ENCODE measurements at regions of chr1 and their contacts with region 1.

Region 1: GRCh38 chr1:171081314-171081753 is 9.4 kb upstream of the FMO3 start:
- DNase-seq: peak; percentile 62
- ATAC-seq: peak; percentile 61
- H3K4me3 ChIP-seq: no peak overlapping the region
- H3K27ac ChIP-seq: no peak overlapping the region
- H3K4me1 ChIP-seq: no peaks in the 10 kb centered on the region
- H3K27me3 ChIP-seq: peaks cover 31% of the 10 kb centered on the region
- CTCF ChIP-seq: peak; percentile 79

Region 2: DNA sequence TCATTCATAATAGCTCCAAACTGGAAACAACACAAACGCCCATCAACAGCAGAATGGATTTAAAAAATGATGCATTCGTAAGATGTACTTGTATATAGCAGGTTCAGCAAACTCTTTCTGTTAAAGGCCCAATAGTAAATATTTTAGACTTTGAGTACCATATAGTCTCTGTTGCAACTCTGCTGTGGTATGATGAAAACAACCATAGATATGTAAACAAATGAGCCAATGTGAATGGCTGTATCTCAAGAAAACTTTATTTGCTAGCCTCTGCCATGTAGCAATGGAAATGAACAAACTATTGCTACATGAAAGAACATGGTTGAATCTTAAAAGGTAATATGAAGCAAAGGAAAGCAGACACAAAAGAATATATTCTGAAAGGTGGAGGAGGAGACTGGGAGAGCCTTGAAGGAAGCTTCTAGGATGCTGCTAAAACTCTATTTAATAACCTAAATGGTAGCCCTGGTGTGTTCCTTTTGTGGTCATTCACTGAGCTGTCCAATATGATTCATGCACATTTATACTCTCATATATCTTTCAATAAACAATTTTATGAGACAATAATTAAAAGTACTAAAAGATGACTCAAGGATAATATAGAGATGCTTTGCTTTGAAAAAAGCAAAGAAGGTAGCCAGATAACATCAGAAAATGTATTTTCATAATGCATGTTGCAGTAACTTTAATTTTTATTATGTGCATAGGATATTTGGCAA is 19.8 kb before region 1 on chr1:
- CTCF ChIA-PET with region 1: no interaction called
- POLR2A ChIA-PET with region 1: no interaction called
- intact Hi-C with region 1: no loop called
- DNase-seq: peak; percentile 69
- ATAC-seq: peak; percentile 96
- H3K4me3 ChIP-seq: no peak overlapping the region
- H3K27ac ChIP-seq: no peak overlapping the region
- H3K4me1 ChIP-seq: peaks cover 11% of the 10 kb centered on the region; the same call in 1 of the 2 replicates
- H3K27me3 ChIP-seq: peaks cover 28% of the 10 kb centered on the region
- CTCF ChIP-seq: no peak

Region 3: DNA sequence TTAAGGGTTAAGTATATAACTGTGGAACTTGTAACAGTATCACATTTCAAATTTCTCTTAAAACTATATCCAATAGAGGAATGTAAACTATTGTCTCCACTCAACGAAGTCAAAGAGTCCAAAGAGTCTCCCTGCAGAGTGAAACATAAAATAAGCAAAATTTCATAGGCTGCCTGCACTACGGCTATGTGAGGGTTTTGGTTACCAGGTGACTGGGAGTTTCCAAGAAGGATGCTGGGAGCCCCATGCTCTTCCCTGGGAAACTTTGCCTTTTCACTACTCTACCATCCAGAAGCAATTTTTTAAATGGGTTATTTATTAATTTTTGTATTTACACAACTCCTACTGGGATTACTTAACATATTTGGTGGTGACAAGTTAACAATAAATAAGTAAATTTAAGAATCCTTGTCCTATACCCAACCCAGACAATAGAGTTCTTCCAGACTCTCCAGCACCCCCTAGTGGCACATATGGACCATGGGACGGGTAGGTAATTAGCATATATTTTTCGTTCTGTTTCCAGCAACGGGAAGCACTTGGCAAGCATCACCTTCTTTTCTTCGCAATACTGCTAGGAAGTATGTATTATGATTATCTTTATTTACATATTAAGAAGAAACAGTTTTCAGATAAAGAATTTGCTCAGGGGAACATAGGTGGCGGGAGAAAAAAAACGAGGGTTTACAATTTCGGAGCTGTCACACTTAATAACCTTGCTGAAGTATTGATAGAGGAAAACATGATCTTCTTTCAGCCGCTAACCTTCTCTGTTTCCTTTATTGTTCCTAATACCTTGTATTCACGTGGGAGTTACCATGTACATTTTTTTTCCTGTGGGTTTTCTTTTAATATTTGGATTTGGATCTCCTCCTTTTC is 107.3 kb after region 1 on chr1:
- CTCF ChIA-PET with region 1: interaction called, 5 read pairs
- POLR2A ChIA-PET with region 1: no interaction called
- intact Hi-C with region 1: loop called (anchors 1 kb)
- DNase-seq: peak; percentile 85
- ATAC-seq: peak; percentile 98
- H3K4me3 ChIP-seq: no peak overlapping the region
- H3K27ac ChIP-seq: no peak overlapping the region
- H3K4me1 ChIP-seq: no peaks in the 10 kb centered on the region
- H3K27me3 ChIP-seq: peaks cover 67% of the 10 kb centered on the region
- CTCF ChIP-seq: peak; percentile 99

Region 4: DNA sequence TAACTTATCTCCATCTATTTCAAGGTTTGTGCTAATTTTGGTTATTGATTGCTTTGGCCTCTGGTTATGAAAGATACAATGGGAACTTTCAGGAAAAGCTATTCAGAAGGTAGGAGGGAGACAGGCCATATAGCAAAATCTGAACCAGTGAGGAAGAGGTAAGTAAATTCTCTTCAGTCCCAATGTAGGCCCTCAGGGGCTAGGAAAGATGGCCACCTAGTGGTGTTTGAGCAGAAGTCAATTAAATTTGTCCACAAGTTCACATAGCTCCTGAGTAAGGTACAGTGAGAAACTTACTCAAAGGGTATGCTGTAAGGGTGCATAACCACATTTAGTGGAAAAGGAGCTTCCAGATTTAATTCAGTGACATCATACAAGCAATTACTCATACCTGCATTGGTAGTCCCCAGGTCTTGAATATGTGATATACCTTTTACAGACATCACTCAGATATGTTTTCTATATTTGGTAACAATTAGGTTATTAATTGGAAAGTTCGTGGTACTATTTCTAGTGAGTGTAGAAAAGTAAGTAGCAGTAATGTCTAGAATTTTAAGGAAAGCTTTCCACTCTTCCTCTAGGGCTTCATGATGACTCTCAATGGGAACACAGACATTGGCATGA is 145.5 kb after region 1 on chr1:
- CTCF ChIA-PET with region 1: interaction called, 10 read pairs
- POLR2A ChIA-PET with region 1: no interaction called
- intact Hi-C with region 1: loop called (anchors 1 kb)
- DNase-seq: peak; percentile 83
- ATAC-seq: peak; percentile 91
- H3K4me3 ChIP-seq: no peak overlapping the region
- H3K27ac ChIP-seq: no peak overlapping the region
- H3K4me1 ChIP-seq: no peaks in the 10 kb centered on the region
- H3K27me3 ChIP-seq: peaks cover 20% of the 10 kb centered on the region
- CTCF ChIP-seq: peak; percentile 96

Measured in PC-3 (cell line).